ENCODE measurements at regions of chr14 and their contacts with region 1.

Region 1: DNA sequence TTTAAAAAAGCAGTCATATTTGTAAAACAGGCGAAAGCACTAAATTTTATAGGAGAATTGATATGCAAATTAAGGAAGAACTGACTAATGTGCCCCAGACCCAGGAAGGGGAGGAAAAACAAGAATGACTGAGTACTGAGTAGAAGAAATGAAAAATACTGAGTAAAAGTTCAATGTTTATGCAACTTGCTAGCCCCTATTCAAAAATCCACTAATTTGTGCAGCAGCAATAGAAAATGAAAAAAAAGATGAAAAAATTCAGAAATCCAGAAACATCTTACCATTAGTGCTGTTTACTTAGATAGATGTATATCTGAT is 6.1 kb downstream of the CHD8 start:
- DNase-seq: no peak
- ATAC-seq: no peak
- H3K4me3 Mint-ChIP-seq: peak overlapping the region; percentile 7
- H3K27ac Mint-ChIP-seq: peak overlapping the region; percentile 78
- H3K4me1 Mint-ChIP-seq: peaks cover 64% of the 10 kb centered on the region
- H3K27me3 Mint-ChIP-seq: no peaks in the 10 kb centered on the region
- CTCF ChIP-seq: no peak

Region 2: DNA sequence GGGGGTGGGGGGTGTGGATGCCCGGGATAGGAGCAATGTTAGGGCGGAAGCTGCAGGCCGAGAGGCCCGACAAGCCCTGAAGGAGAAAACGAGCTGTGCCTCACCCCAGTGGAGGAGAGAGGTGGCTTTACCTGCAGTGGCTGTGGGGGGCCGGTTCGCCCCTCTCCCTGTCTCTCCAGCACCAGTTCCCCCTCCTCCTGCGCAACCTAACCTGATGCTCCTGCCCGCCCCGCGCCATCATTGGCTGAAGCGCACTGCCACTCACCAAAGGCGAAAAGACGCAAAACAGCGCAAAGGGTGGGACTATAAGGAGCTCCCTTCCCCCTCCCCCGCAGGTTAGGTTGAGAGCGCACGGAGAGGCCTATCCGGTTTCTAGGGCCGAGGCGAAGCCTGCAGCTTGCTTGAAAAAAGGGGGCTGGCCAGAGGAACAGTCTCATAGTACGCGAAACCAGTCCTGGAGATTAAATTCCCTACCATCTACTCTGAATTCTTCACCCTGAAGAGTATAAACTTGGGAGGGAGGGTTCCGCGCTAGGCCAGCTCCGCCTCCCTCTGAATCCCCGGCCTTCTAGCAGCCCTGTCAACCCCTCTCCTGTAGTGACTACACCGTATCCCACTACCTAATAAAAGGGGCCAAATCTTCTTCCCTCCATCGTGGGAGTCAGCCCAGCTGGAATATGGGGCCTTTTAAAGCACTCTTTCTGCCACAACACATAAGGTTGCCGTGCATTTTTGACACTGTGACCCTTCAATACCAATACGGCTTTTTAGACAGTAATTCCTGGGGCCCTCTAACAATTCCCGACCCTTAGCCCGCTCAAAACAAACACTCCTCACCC is 12.6 kb before region 1 on chr14:
- CTCF ChIA-PET with region 1: interaction called, 27 read pairs
- POLR2A ChIA-PET with region 1: interaction called, 17 read pairs
- intact Hi-C with region 1: loop called (anchors 1 kb)
- DNase-seq: peak; percentile 100
- ATAC-seq: peak; percentile 100
- H3K4me3 Mint-ChIP-seq: peak overlapping the region; percentile 81
- H3K27ac Mint-ChIP-seq: peak overlapping the region; percentile 86
- H3K4me1 Mint-ChIP-seq: peaks cover 46% of the 10 kb centered on the region
- H3K27me3 Mint-ChIP-seq: no peaks in the 10 kb centered on the region
- CTCF ChIP-seq: no peak

Region 3: GRCh38 chr14:21533294-21533693 is 83.4 kb after region 1 on chr14:
- CTCF ChIA-PET with region 1: no interaction called
- POLR2A ChIA-PET with region 1: no interaction called
- intact Hi-C with region 1: no loop called
- DNase-seq: no peak
- ATAC-seq: no peak
- H3K4me3 Mint-ChIP-seq: no peak overlapping the region
- H3K27ac Mint-ChIP-seq: no peak overlapping the region
- H3K4me1 Mint-ChIP-seq: peaks cover 12% of the 10 kb centered on the region
- H3K27me3 Mint-ChIP-seq: peaks cover 24% of the 10 kb centered on the region
- CTCF ChIP-seq: no peak

Region 4: DNA sequence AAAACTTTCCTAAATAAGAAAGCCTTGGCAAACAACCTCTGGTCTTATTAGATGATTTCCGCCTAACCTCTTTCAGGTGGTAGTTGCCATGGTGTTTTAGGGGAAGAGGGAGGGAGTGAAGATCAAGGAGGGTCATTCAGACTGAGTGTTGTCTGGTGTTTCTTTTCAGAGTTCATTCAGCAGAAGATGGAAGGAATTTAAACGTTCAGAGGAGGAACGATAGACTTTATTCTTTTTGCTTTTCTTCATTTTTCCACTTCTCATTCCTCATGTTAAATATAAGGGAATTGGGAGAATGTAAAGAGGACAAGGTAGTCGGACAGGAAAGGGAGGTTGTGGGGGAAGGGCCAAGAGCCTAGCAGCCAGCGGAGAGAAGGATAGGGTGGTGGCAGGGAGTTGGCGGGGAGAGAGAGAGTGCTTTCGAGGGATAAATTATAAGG is 93.7 kb after region 1 on chr14:
- CTCF ChIA-PET with region 1: no interaction called
- POLR2A ChIA-PET with region 1: no interaction called
- intact Hi-C with region 1: no loop called
- DNase-seq: no peak
- ATAC-seq: no peak
- H3K4me3 Mint-ChIP-seq: no peak overlapping the region
- H3K27ac Mint-ChIP-seq: no peak overlapping the region
- H3K4me1 Mint-ChIP-seq: no peaks in the 10 kb centered on the region
- H3K27me3 Mint-ChIP-seq: peaks cover 11% of the 10 kb centered on the region
- CTCF ChIP-seq: no peak

Region 5: GRCh38 chr14:21589317-21589716 is 139.5 kb after region 1 on chr14:
- CTCF ChIA-PET with region 1: no interaction called
- POLR2A ChIA-PET with region 1: no interaction called
- intact Hi-C with region 1: no loop called
- DNase-seq: no peak
- ATAC-seq: no peak
- H3K4me3 Mint-ChIP-seq: no peak overlapping the region
- H3K27ac Mint-ChIP-seq: no peak overlapping the region
- H3K4me1 Mint-ChIP-seq: no peaks in the 10 kb centered on the region
- H3K27me3 Mint-ChIP-seq: peaks cover 16% of the 10 kb centered on the region
- CTCF ChIP-seq: no peak

Measured in activated CD8-positive, alpha-beta T cell treated with anti-CD3 and anti-CD28 coated beads for 36 hours (primary cell).